Activated T-helper 1 cell treated with anti-CD3 and anti-CD28 coated beads, Interleukin-12 subunit alpha, Interleukin-12 subunit beta, Interleukin-2, Interleukin-4 antibody, amounts not matched to agents 30 ng/mL and 10 ng/mL and 1 ng/mL, durations not matched to agents 14 hours and 24 hours and 36 hours (primary cell): ENCODE measurements at regions of chr4 and their contacts with region 1.

Region 1: GRCh38 chr4:55546756-55547465 is at the start of gene CLOCK:
- DNase-seq: peak; percentile 80
- H3K4me3 Mint-ChIP-seq: peak within 1 kb of the TSS; percentile 92
- H3K27ac Mint-ChIP-seq: peak within 1 kb of the TSS; percentile 86
- H3K4me1 Mint-ChIP-seq: peaks cover 41% of the 10 kb centered on the region
- H3K27me3 Mint-ChIP-seq: peaks cover 13% of the 10 kb centered on the region
- total RNA-seq, gene CLOCK: 12.7 and 13.0 TPM in 2 replicates

Region 2: GRCh38 chr4:54941994-54942552 is 604.8 kb before region 1 on chr4:
- intact Hi-C with region 1: loop called (anchors 5 kb)
- DNase-seq: peak; percentile 16
- H3K4me3 Mint-ChIP-seq: peak overlapping the region; percentile 43
- H3K27ac Mint-ChIP-seq: peak overlapping the region; percentile 38
- H3K4me1 Mint-ChIP-seq: peaks cover 34% of the 10 kb centered on the region
- H3K27me3 Mint-ChIP-seq: no peaks in the 10 kb centered on the region

Region 3: GRCh38 chr4:55435141-55435841 is 111.6 kb before region 1 on chr4:
- intact Hi-C with region 1: loop called (anchors 5 kb)
- DNase-seq: peak; percentile 1
- H3K4me3 Mint-ChIP-seq: no peak overlapping the region
- H3K27ac Mint-ChIP-seq: peak overlapping the region; percentile 7
- H3K4me1 Mint-ChIP-seq: peaks cover 14% of the 10 kb centered on the region
- H3K27me3 Mint-ChIP-seq: no peaks in the 10 kb centered on the region

Region 4: DNA sequence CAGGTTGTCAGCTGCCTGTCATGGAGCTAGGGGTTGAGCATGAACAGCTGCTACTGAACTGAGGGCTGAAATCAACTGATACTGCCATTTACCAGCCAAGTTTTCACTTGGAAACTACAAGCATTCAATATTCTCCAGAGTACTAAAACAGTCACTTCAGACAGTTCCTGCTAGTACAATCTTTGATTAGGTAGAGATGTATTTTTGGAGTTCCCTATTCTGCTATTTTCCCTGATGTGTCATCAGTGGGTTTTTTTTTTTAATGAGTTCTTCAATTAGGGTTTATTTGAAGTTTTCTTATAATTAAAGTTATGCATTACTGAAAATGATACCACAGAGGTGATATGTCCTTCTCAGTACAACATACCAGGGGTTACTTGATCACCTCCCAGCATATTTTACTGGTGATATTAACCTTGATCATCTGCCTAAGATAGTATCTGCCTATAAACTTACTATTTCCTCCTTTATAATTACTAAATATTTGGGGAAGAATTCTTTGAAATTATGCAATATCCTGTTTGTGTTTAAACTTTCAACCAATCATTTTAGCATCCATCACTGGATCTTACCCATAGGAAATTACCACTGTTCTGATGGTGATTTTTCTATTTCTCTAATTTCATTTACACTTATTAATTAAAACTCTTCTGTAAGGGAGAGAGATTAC is 31.6 kb after region 1 on chr4:
- intact Hi-C with region 1: no loop called
- DNase-seq: no peak
- H3K4me3 Mint-ChIP-seq: no peak overlapping the region
- H3K27ac Mint-ChIP-seq: no peak overlapping the region
- H3K4me1 Mint-ChIP-seq: no peaks in the 10 kb centered on the region
- H3K27me3 Mint-ChIP-seq: no peaks in the 10 kb centered on the region

Region 5: GRCh38 chr4:55853484-55854046 is 306.7 kb after region 1 on chr4 and contains the start of gene EXOC1:
- intact Hi-C with region 1: loop called (anchors 1 kb)
- DNase-seq: peak; percentile 93
- H3K4me3 Mint-ChIP-seq: peak within 1 kb of the TSS; percentile 37
- H3K27ac Mint-ChIP-seq: peak within 1 kb of the TSS; percentile 53
- H3K4me1 Mint-ChIP-seq: peaks cover 27% of the 10 kb centered on the region
- H3K27me3 Mint-ChIP-seq: peaks cover 2% of the 10 kb centered on the region
- total RNA-seq, gene EXOC1: 18.3 and 18.8 TPM in 2 replicates

Region 6: GRCh38 chr4:56261027-56261426 is 714.1 kb after region 1 on chr4:
- intact Hi-C with region 1: loop called (anchors 5 kb)
- DNase-seq: peak; percentile 34
- H3K4me3 Mint-ChIP-seq: peak overlapping the region; percentile 39
- H3K27ac Mint-ChIP-seq: peak overlapping the region; percentile 22
- H3K4me1 Mint-ChIP-seq: peaks cover 32% of the 10 kb centered on the region
- H3K27me3 Mint-ChIP-seq: peaks cover 19% of the 10 kb centered on the region

Region 7: GRCh38 chr4:56435306-56435926 is 888.5 kb after region 1 on chr4 and contains the start of gene PPAT:
- intact Hi-C with region 1: loop called (anchors 1 kb)
- DNase-seq: peak; percentile 98
- H3K4me3 Mint-ChIP-seq: peak within 1 kb of the TSS; percentile 94
- H3K27ac Mint-ChIP-seq: peak within 1 kb of the TSS; percentile 99
- H3K4me1 Mint-ChIP-seq: peaks cover 52% of the 10 kb centered on the region
- H3K27me3 Mint-ChIP-seq: peaks cover 3% of the 10 kb centered on the region
- total RNA-seq, gene PPAT: 57.4 and 60.1 TPM in 2 replicates

Region 8: DNA sequence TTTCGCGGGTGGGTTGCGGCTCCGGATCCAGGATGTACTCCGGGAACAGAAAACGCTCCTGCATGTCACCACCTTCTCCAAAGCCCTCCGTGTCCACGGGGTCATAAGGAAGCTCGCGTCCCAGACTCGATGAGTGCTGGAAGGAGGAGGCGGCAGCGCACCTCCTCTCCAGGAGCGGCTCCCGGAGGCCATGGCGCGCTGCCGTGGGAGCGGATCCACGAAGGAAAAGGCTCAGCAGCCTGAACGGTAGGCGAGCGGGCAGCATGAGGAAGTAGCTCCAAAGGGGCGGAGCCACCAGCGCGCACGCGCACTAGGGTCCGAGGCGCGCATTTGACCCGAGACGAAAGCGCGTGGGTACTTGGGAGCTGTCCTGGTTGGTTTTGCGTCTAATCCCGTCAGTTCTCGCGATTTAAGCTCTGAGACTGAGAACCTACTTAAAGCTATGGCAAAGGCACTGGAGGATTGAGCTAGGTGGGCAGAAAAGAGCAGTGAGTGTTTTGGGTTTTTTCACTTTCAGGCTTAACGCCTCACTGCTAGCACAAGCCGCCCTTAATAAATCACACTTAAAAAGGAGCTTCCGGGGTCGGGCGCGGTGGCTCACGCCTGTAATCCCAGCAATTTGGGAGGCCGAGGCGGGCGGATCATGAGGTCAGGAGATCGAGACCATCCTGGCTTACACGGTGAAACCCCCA is 1430.6 kb after region 1 on chr4 and contains the start of gene NOA1:
- intact Hi-C with region 1: loop called (anchors 5 kb)
- DNase-seq: peak; percentile 98
- H3K4me3 Mint-ChIP-seq: peak within 1 kb of the TSS; percentile 100
- H3K27ac Mint-ChIP-seq: peak within 1 kb of the TSS; percentile 100
- H3K4me1 Mint-ChIP-seq: peaks cover 51% of the 10 kb centered on the region
- H3K27me3 Mint-ChIP-seq: no peaks in the 10 kb centered on the region
- total RNA-seq, gene NOA1: 17.7 and 18.3 TPM in 2 replicates